ENCODE measurements at regions of chr1 and their contacts with region 1.

Region 1: GRCh38 chr1:58968360-58968952 is 184.6 kb upstream of the JUN start:
- DNase-seq: peak; percentile 92
- ATAC-seq: peak; percentile 92
- H3K4me3 ChIP-seq: peak overlapping the region; percentile 58
- H3K27ac ChIP-seq: peak overlapping the region; percentile 94
- H3K4me1 ChIP-seq: peaks cover 27% of the 10 kb centered on the region
- H3K27me3 ChIP-seq: no peaks in the 10 kb centered on the region
- CTCF ChIP-seq: no peak
- EP300 ChIP-seq: peak; percentile 22 to 29; a peak in 1 of 4 replicates
- POLR2A ChIP-seq: peak; percentile 64
- RAD21 ChIP-seq: peak; percentile 37

Region 2: GRCh38 chr1:58528518-58528917 is 439.9 kb before region 1 on chr1:
- CTCF ChIA-PET with region 1: no interaction called
- POLR2A ChIA-PET with region 1: no interaction called
- RAD21 ChIA-PET with region 1: no interaction called
- SMC1A ChIA-PET with region 1: no interaction called
- in situ Hi-C with region 1: no loop called
- intact Hi-C with region 1: no loop called
- DNase-seq: no peak
- ATAC-seq: no peak
- H3K4me3 ChIP-seq: no peak overlapping the region
- H3K27ac ChIP-seq: no peak overlapping the region
- H3K4me1 ChIP-seq: no peaks in the 10 kb centered on the region
- H3K27me3 ChIP-seq: no peaks in the 10 kb centered on the region
- CTCF ChIP-seq: no peak
- EP300 ChIP-seq: no peak
- POLR2A ChIP-seq: no peak
- RAD21 ChIP-seq: no peak

Region 3: GRCh38 chr1:58816072-58816746 is 152.2 kb before region 1 on chr1:
- CTCF ChIA-PET with region 1: no interaction called
- POLR2A ChIA-PET with region 1: no interaction called
- RAD21 ChIA-PET with region 1: interaction called, 10 read pairs
- SMC1A ChIA-PET with region 1: no interaction called
- in situ Hi-C with region 1: no loop called
- intact Hi-C with region 1: no loop called
- DNase-seq: peak; percentile 53
- ATAC-seq: peak; percentile 95
- H3K4me3 ChIP-seq: peak overlapping the region; percentile 88
- H3K27ac ChIP-seq: peak overlapping the region; percentile 73
- H3K4me1 ChIP-seq: peaks cover 13% of the 10 kb centered on the region
- H3K27me3 ChIP-seq: no peaks in the 10 kb centered on the region
- CTCF ChIP-seq: peak; percentile 22 to 44 (median 24); a peak in 3 of 6 replicates
- EP300 ChIP-seq: no peak
- POLR2A ChIP-seq: peak; percentile 86
- RAD21 ChIP-seq: peak; percentile 45

Region 4: DNA sequence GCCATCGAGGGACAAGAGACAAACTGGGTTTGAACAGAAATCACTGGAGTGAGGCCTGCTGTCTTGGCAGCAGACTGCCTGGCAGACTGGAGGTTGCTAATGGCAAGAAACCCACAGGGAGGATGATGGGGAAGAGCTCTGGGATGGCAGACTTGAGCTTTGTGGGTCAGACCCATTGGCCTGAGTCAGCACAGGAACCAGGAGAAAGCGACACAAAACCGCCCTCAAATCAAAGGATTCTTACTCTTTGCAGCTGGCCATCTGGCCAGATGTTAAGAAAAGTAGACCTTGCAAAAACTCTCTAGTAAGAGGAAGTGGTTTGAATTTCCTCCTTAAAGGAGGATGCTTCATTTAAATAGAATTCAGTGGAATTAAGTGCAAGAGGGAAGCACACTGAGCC is 10.6 kb after region 1 on chr1:
- CTCF ChIA-PET with region 1: no interaction called
- POLR2A ChIA-PET with region 1: no interaction called
- RAD21 ChIA-PET with region 1: interaction called, 6 read pairs
- SMC1A ChIA-PET with region 1: interaction called, 15 read pairs
- in situ Hi-C with region 1: no loop called
- intact Hi-C with region 1: no loop called
- DNase-seq: no peak
- ATAC-seq: no peak
- H3K4me3 ChIP-seq: no peak overlapping the region
- H3K27ac ChIP-seq: no peak overlapping the region
- H3K4me1 ChIP-seq: peaks cover 4% of the 10 kb centered on the region; the same call in 1 of the 2 replicates
- H3K27me3 ChIP-seq: no peaks in the 10 kb centered on the region; a peak in 1 of 4 replicates
- CTCF ChIP-seq: no peak
- EP300 ChIP-seq: no peak
- POLR2A ChIP-seq: no peak
- RAD21 ChIP-seq: no peak

Region 5: GRCh38 chr1:59013276-59013927 is 44.9 kb after region 1 on chr1:
- CTCF ChIA-PET with region 1: interaction called, 10 read pairs
- POLR2A ChIA-PET with region 1: interaction called, 22 read pairs
- RAD21 ChIA-PET with region 1: interaction called, 34 read pairs
- SMC1A ChIA-PET with region 1: interaction called, 38 read pairs
- in situ Hi-C with region 1: no loop called
- intact Hi-C with region 1: no loop called
- DNase-seq: no peak
- ATAC-seq: peak; percentile 84
- H3K4me3 ChIP-seq: peak overlapping the region; percentile 62
- H3K27ac ChIP-seq: peak overlapping the region; percentile 84
- H3K4me1 ChIP-seq: peaks cover 42% of the 10 kb centered on the region
- H3K27me3 ChIP-seq: no peaks in the 10 kb centered on the region
- CTCF ChIP-seq: no peak
- EP300 ChIP-seq: 0 out of 4 replicates have a peak, but pooled peaks of 1 of the 2 experiments have one; percentile 34
- POLR2A ChIP-seq: no peak
- RAD21 ChIP-seq: no peak

Region 6: GRCh38 chr1:59046730-59047157 is 78.3 kb after region 1 on chr1:
- CTCF ChIA-PET with region 1: no interaction called
- POLR2A ChIA-PET with region 1: no interaction called
- RAD21 ChIA-PET with region 1: interaction called, 6 read pairs
- SMC1A ChIA-PET with region 1: interaction called, 16 read pairs
- in situ Hi-C with region 1: no loop called
- intact Hi-C with region 1: no loop called
- DNase-seq: peak; percentile 59
- ATAC-seq: peak; percentile 99
- H3K4me3 ChIP-seq: no peak overlapping the region
- H3K27ac ChIP-seq: peak overlapping the region; percentile 70
- H3K4me1 ChIP-seq: peaks cover 26% of the 10 kb centered on the region
- H3K27me3 ChIP-seq: no peaks in the 10 kb centered on the region
- CTCF ChIP-seq: peak; percentile 42 to 45 (median 44); a peak in 5 of 6 replicates
- EP300 ChIP-seq: peak in 1 of 2 experiments; percentile 45; a peak in 1 of 4 replicates
- POLR2A ChIP-seq: no peak
- RAD21 ChIP-seq: peak; percentile 66

Region 7: GRCh38 chr1:59100708-59101374 is 132.4 kb after region 1 on chr1:
- CTCF ChIA-PET with region 1: no interaction called
- POLR2A ChIA-PET with region 1: no interaction called
- RAD21 ChIA-PET with region 1: no interaction called
- SMC1A ChIA-PET with region 1: no interaction called
- in situ Hi-C with region 1: no loop called
- intact Hi-C with region 1: no loop called
- DNase-seq: no peak
- ATAC-seq: no peak
- H3K4me3 ChIP-seq: no peak overlapping the region
- H3K27ac ChIP-seq: no peak overlapping the region
- H3K4me1 ChIP-seq: peaks cover 6% of the 10 kb centered on the region; the same call in 1 of the 2 replicates
- H3K27me3 ChIP-seq: no peaks in the 10 kb centered on the region
- CTCF ChIP-seq: no peak
- EP300 ChIP-seq: no peak
- POLR2A ChIP-seq: no peak
- RAD21 ChIP-seq: no peak

Measured in GM12878 (cell line).